ENCODE measurements at regions of chr9 and their contacts with region 1.

Region 1: DNA sequence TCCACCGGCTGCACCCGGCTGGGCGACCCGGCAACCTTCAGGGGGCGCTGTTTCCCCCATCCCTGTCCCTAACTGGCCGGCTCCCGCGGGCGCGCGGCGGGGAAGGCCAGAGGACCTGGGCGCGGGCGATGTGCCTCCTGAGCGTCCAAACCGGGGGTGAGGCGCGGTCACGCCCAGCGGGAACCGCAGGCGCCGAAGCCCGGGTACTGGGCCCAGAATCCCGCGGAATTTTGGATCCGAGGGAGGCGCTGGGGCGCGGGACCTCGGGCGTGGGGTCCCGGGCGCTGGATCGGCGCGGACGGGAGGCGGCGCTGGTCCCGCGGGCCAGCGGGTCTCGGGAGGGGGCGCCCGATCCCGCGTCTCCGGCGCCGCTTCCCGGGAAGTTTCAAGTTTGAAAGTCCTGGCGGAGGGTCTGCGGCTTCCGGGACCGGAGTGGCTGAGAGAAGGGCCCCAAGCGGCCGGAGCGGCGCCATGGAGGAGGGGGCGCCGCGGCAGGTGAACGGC is at the start of gene PKN3:
- DNase-seq: no peak
- H3K4me3 ChIP-seq: peak within 1 kb of the TSS; percentile 69 to 81 (median 77)
- H3K27ac ChIP-seq: peak within 1 kb of the TSS; percentile 74 to 85 (median 80)
- H3K4me1 ChIP-seq: peaks cover 6 to 27% (median 23%) of the 10 kb centered on the region in 4 donors
- H3K27me3 ChIP-seq: no peaks in the 10 kb centered on the region
- CTCF ChIP-seq: peak; percentile 86 to 92 (median 89)
- EP300 ChIP-seq: no peak
- POLR2A ChIP-seq: no peak
- total RNA-seq, gene PKN3: 4.0 to 10.0 (median 7.6) TPM

Region 2: GRCh38 chr9:128643519-128644300 is 58.8 kb before region 1 on chr9:
- intact Hi-C with region 1: loop called (anchors 5 kb)
- DNase-seq: no peak
- H3K4me3 ChIP-seq: no peak overlapping the region
- H3K27ac ChIP-seq: no peak overlapping the region
- H3K4me1 ChIP-seq: no peaks in the 10 kb centered on the region
- H3K27me3 ChIP-seq: no peaks in the 10 kb centered on the region
- CTCF ChIP-seq: no peak
- EP300 ChIP-seq: no peak
- POLR2A ChIP-seq: no peak

Region 3: DNA sequence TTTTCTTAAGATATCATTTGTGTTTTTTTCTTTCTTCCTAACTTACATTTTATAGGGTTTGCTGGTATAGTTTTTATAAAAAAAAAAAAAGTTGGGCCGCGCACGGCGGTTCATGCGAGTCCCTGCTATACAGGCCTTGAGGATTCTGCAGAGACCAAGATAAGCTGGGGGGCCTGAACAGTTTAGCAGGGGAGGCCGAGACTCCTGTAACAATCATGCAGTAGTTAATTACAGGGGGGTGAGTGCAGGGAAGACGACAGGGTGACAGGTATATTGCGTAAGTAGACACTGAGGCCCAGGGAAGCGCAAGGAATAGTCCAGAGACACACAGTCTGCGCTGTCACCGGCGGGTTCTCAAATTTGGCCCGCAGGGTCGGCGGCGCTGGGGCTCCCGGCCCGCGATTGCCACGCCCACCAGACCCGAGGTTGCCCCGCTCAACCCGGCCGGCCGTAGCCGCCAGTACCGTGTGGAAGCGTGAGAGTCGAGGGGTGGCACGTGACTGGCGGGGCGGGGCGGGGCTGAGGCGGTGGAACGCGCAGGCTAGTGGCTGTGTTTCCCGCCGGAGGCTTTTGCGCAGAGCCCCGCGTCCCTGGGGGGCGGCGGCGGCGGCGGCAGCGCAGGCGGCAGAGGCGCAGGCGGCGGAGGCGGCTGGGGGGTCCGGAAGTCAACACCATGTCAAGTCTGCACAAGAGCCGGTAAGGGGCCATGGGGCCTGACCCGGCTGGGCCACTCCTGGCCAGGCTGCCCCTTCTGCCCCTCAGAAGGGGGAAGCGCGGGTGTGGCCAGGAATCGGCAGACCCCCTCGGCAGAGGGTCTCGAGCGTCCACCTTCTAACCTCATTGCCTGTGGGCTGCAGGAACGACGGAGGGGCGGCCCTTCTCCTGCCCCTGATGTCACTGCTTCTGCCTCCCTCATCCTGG is 84.4 kb after region 1 on chr9 and contains the start of gene TBC1D13:
- intact Hi-C with region 1: loop called (anchors 2 kb)
- DNase-seq: peak; percentile 98
- H3K4me3 ChIP-seq: peak within 1 kb of the TSS; percentile 93 to 100 (median 98)
- H3K27ac ChIP-seq: peak within 1 kb of the TSS; percentile 85 to 88 (median 86)
- H3K4me1 ChIP-seq: peaks cover 5 to 40% (median 35%) of the 10 kb centered on the region in 4 donors
- H3K27me3 ChIP-seq: no peaks in the 10 kb centered on the region
- CTCF ChIP-seq: peak in 1 of 3 experiments; percentile 33
- EP300 ChIP-seq: no peak
- POLR2A ChIP-seq: no peak
- total RNA-seq, gene TBC1D13: 12.4 to 20.8 (median 16.1) TPM

Region 4: DNA sequence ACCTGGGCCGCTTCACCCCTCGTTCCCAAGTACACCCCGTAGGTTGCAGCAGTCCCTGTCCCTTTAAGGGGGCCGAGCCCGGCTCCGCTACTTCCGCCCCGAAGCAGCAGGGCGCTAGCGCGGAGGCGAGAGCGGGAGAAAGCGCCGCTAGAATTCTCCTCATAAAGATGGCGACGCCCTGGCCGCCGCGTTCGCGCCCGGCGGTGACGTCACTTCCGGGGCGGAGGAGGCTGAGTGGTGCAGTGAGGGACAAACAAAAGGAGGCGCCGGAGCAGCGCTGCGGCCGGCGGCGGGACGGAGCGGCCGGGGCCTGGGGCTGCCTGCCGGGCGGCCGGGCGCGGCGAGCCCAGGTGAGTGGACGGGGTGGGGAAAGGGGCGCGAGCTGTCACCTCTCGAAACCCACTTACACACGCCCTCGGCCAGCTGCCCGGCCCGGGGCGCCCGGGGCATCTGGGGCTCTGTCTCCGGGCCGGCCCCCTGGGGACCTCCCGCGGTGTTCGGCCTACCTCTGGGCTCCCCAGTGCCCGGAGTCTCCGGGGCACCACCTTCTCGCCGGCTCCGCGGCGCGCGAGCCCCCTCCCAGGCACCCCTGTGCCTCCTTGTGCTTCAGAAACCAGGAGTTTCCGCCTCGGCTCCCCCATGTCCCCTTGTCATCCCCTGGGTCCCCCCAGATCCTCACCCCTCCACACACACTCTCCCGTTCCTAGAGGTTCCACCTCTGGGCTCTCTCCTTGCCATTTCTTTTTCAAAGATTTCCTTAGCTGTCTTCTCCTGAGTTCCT is 179.6 kb after region 1 on chr9 and contains the starts of genes KYAT1 and LRRC8A:
- intact Hi-C with region 1: no loop called
- DNase-seq: peak; percentile 99
- H3K4me3 ChIP-seq: peak within 1 kb of the TSS; percentile 83 to 99 (median 94)
- H3K27ac ChIP-seq: peak within 1 kb of the TSS; percentile 97 to 99 (median 98)
- H3K4me1 ChIP-seq: peaks cover 50 to 66% (median 59%) of the 10 kb centered on the region in 4 donors
- H3K27me3 ChIP-seq: no peaks in the 10 kb centered on the region
- CTCF ChIP-seq: peak in 2 of 3 experiments; percentile 11 to 27
- EP300 ChIP-seq: no peak
- POLR2A ChIP-seq: no peak
- total RNA-seq, gene KYAT1: 4.3 to 8.4 (median 6.2) TPM
- total RNA-seq, gene LRRC8A: 39.5 to 94.2 (median 55.6) TPM

Measured in esophagus muscularis mucosa (tissue), 4 donors.